GM12878 (cell line): ENCODE measurements at regions of chr13 and their contacts with region 1.

Region 1: GRCh38 chr13:99281811-99282263 is 23.7 kb upstream of the GPR18 start:
- DNase-seq: no peak
- ATAC-seq: peak; percentile 89
- H3K4me3 ChIP-seq: peak overlapping the region; percentile 8
- H3K27ac ChIP-seq: peak overlapping the region; percentile 79
- H3K4me1 ChIP-seq: peaks cover 53% of the 10 kb centered on the region
- H3K27me3 ChIP-seq: no peaks in the 10 kb centered on the region
- CTCF ChIP-seq: no peak
- EP300 ChIP-seq: no peak
- POLR2A ChIP-seq: no peak
- RAD21 ChIP-seq: no peak

Region 2: DNA sequence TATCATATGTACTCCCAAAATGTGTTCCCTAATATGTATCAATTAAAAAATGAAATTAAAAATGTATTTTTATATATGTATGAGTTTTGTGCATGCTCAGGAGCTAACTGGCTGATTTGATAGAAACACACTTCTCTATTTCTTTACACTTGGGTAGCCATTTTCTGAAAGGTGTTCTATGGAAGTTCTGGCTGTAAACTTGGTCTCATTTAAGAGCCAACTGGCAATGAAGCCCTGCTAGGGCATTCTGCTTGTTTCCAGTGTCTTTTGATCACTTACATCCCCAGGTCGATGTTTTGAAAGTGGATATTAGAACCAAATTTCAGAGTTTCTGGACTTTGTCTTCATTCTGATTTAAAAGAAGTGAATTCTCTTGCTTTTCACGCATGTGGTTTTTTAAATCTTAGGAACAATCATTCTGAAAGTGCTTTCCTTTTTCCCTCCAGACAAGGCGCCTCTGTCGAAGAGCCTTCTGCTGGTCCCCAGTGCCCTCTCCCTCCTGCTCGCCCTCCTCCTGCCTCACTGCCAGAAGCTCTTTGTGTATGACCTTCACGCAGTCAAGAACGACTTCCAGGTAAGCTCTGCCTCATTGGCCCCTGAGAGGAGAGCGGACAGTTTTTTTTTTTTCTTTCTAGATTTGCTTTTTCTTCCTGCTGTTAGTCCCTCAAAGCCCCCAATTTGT is 43.7 kb before region 1 on chr13:
- CTCF ChIA-PET with region 1: no interaction called
- POLR2A ChIA-PET with region 1: no interaction called
- RAD21 ChIA-PET with region 1: no interaction called
- SMC1A ChIA-PET with region 1: no interaction called
- in situ Hi-C with region 1: no loop called
- intact Hi-C with region 1: no loop called
- DNase-seq: no peak
- ATAC-seq: peak; percentile 85
- H3K4me3 ChIP-seq: peak overlapping the region; percentile 41; the same call in 1 of the 2 replicates
- H3K27ac ChIP-seq: peak overlapping the region; percentile 49
- H3K4me1 ChIP-seq: peaks cover 7% of the 10 kb centered on the region
- H3K27me3 ChIP-seq: no peaks in the 10 kb centered on the region
- CTCF ChIP-seq: no peak
- EP300 ChIP-seq: no peak
- POLR2A ChIP-seq: no peak
- RAD21 ChIP-seq: no peak; the same call in 1 of the 2 replicates

Region 3: DNA sequence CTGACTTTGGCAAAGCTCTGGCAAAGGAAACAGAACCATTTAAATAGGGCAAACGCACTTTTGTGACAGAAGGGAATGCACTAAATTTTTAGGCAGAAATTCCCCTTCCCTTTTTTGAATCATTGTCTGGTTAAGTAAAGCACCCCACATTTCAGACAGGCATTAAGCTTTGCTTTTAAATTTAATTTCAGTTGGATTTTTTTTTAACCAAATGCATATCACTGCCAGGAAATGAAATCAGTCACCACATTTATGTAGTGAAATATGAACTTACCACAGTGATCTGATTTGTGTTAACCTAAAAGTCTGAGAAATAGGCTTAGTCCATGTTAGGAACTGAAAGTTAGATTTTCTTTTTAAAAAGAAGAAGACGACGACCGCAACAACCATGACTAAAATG is 14.6 kb after region 1 on chr13:
- CTCF ChIA-PET with region 1: interaction called, 11 read pairs
- POLR2A ChIA-PET with region 1: interaction called, 28 read pairs
- RAD21 ChIA-PET with region 1: interaction called, 247 read pairs
- SMC1A ChIA-PET with region 1: interaction called, 264 read pairs
- in situ Hi-C with region 1: no loop called
- intact Hi-C with region 1: loop called (anchors 2 kb)
- DNase-seq: no peak
- ATAC-seq: peak; percentile 15
- H3K4me3 ChIP-seq: peak overlapping the region; percentile 58; the same call in 1 of the 2 replicates
- H3K27ac ChIP-seq: peak overlapping the region; percentile 62
- H3K4me1 ChIP-seq: peaks cover 14% of the 10 kb centered on the region
- H3K27me3 ChIP-seq: no peaks in the 10 kb centered on the region
- CTCF ChIP-seq: no peak
- EP300 ChIP-seq: no peak
- POLR2A ChIP-seq: no peak
- RAD21 ChIP-seq: peak; percentile 2; the same call in 1 of the 2 replicates

Region 4: DNA sequence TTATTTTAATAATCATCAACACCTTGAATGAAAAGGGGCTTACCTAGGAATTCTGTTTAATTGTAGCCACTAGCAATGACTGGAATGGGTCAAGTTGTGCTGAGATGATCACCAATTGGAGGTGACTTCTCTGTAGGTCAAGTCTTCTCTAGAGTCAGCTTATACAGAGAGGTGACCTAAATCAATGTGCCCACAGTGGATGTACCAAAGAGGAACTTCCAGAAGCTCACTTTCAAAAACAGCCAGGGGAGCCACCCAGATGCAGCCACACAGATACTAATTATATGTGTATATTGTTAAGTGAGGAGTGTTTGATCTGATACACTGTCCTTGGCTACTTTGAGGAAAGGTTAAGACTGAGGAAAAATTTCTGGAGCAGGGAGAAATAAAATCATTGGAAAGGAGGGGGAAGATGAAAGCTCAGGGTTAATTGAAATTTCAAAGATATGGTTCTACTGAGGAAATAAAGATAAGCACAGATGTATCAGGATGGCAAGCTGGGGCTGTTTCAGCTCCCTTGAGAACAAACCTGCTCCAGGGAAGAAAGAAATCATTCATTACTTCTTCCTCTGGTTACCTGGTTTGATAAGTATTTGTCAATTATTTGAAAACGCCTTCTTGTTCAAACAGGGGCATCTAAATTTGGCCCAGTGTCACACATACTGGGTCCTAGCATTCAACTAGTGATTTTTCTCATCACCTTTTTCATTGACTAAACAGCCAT is 20.2 kb after region 1 on chr13:
- CTCF ChIA-PET with region 1: interaction called, 11 read pairs
- POLR2A ChIA-PET with region 1: interaction called, 28 read pairs
- RAD21 ChIA-PET with region 1: interaction called, 247 read pairs
- SMC1A ChIA-PET with region 1: interaction called, 264 read pairs
- in situ Hi-C with region 1: no loop called
- intact Hi-C with region 1: loop called (anchors 2 kb)
- DNase-seq: no peak
- ATAC-seq: peak; percentile 39
- H3K4me3 ChIP-seq: peak overlapping the region; percentile 98
- H3K27ac ChIP-seq: peak overlapping the region; percentile 93
- H3K4me1 ChIP-seq: peaks cover 18% of the 10 kb centered on the region
- H3K27me3 ChIP-seq: no peaks in the 10 kb centered on the region
- CTCF ChIP-seq: no peak
- EP300 ChIP-seq: no peak
- POLR2A ChIP-seq: no peak
- RAD21 ChIP-seq: no peak

Region 5: GRCh38 chr13:99484473-99484872 is 202.6 kb after region 1 on chr13:
- CTCF ChIA-PET with region 1: no interaction called
- POLR2A ChIA-PET with region 1: no interaction called
- RAD21 ChIA-PET with region 1: no interaction called
- SMC1A ChIA-PET with region 1: no interaction called
- in situ Hi-C with region 1: no loop called
- intact Hi-C with region 1: no loop called
- DNase-seq: no peak
- ATAC-seq: no peak
- H3K4me3 ChIP-seq: no peak overlapping the region
- H3K27ac ChIP-seq: no peak overlapping the region
- H3K4me1 ChIP-seq: no peaks in the 10 kb centered on the region
- H3K27me3 ChIP-seq: no peaks in the 10 kb centered on the region; a peak in 1 of 4 replicates
- CTCF ChIP-seq: no peak
- EP300 ChIP-seq: no peak
- POLR2A ChIP-seq: no peak
- RAD21 ChIP-seq: no peak

Region 6: DNA sequence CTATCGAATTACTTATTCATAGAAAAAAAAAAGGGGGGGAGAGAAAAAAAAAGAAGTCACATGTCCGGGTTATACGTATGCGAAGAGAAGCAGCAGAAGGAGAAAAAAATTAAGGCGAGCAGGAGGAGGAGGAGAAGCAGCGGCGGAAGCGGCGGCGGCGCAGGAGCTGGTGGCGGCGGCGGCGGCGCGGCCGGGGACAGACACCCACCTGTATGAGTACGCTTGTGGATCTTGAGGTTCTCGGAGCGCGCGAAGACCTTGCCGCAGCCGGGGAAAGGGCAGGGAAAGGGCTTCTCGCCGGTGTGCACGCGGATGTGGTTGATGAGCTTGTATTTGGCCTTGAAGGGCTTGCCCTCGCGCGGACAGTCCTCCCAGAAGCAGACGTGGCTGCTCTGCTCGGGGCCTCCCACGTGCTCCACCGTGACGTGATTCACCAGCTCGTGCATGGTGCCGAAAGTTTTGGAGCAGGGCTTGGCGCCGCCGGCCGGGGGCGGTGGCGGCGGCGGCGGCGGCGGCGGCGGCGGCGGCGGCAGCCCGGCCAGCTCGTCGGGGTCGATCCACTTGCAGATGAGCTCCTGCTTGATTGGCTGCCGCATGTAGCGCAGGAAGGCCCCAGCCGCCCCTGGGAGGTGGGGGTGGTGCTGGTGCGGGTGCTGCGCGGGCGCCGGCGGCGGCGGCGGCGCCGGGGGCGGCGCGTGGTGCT is 688.2 kb after region 1 on chr13:
- CTCF ChIA-PET with region 1: no interaction called
- POLR2A ChIA-PET with region 1: no interaction called
- RAD21 ChIA-PET with region 1: no interaction called
- SMC1A ChIA-PET with region 1: no interaction called
- in situ Hi-C with region 1: no loop called
- intact Hi-C with region 1: no loop called
- DNase-seq: no peak
- ATAC-seq: no peak
- H3K4me3 ChIP-seq: no peak overlapping the region; the same call in 1 of the 2 replicates
- H3K27ac ChIP-seq: no peak overlapping the region
- H3K4me1 ChIP-seq: no peaks in the 10 kb centered on the region
- H3K27me3 ChIP-seq: peaks cover 9 to 29% of the 10 kb centered on the region in 2 experiments
- CTCF ChIP-seq: no peak
- EP300 ChIP-seq: no peak
- POLR2A ChIP-seq: no peak
- RAD21 ChIP-seq: no peak